ENCODE measurements at regions of chr3 and their contacts with region 1.

Region 1: DNA sequence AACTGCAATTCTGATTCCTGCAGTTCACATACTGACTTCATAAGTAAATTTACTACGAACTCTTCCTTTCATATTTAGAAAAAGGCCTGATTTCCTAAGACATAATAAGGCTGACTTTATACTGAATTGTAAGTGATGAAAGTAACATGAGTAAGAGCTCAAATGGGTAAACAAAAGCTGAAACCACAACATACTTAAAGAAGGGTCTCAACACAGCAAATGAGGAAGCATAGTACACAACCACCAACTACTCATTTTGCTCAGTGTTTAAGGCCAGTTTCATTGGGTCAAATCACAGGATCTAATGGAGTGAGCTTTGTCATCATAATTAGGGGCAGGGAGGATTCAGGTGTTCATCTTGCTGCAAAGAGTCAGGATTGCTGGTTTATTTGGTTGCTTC is 81.4 kb downstream of the SETD2 start:
- DNase-seq: no peak
- H3K4me3 ChIP-seq: no peak overlapping the region
- H3K27ac ChIP-seq: no peak overlapping the region
- H3K4me1 ChIP-seq: peaks cover 0 to 7% (median 0%) of the 10 kb centered on the region in 4 donors
- H3K27me3 ChIP-seq: no peaks in the 10 kb centered on the region
- CTCF ChIP-seq: no peak
- EP300 ChIP-seq: no peak
- POLR2A ChIP-seq: no peak

Region 2: GRCh38 chr3:47324278-47324865 is 241.9 kb after region 1 on chr3:
- in situ Hi-C with region 1: loop called in 1 of 4 experiments (anchors 5 kb)
- intact Hi-C with region 1: no loop called
- DNase-seq: peak; percentile 55
- H3K4me3 ChIP-seq: no peak overlapping the region
- H3K27ac ChIP-seq: no peak overlapping the region
- H3K4me1 ChIP-seq: no peaks in the 10 kb centered on the region
- H3K27me3 ChIP-seq: no peaks in the 10 kb centered on the region
- CTCF ChIP-seq: peak; percentile 57 to 67 (median 65)
- EP300 ChIP-seq: no peak
- POLR2A ChIP-seq: no peak